ENCODE measurements at regions of chr6 and their contacts with region 1.

Region 1: GRCh38 chr6:40947876-40948526 is 91.0 kb downstream of the UNC5CL start:
- H3K4me3 ChIP-seq: no peak overlapping the region
- H3K27ac ChIP-seq: no peak overlapping the region
- H3K4me1 ChIP-seq: no peaks in the 10 kb centered on the region
- CTCF ChIP-seq: no peak

Region 2: DNA sequence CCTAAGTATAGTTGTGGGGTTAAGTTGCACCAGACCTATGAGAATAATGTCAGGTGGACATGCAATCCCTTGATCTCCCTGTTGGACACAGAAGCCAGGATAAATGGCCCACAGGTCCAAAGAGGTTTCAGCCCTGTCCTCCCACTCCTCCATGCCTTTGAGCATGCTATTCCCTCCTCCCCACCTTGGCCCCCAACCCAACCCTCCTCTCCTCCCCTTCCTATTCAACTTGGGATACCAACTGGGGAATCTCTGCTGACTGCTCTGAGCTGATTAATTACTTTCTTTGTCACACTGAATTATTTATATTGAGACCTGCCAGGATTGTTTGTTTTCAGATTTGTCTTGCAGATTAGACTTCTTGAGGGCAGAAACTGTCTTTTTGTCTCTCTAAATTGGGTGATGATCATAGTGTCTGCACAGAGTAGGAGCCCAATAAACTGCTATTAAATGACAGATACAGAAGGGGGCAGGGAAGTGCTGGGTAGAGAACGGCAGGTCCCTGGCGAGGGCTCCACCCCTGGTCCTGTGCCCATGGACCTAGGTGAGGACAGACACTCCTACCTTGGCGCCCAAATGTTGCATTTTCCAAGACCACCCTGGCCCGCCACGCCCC is 29.9 kb before region 1 on chr6:
- CTCF ChIA-PET with region 1: no interaction called
- POLR2A ChIA-PET with region 1: interaction called, 10 read pairs
- H3K4me3 ChIP-seq: no peak overlapping the region
- H3K27ac ChIP-seq: no peak overlapping the region
- H3K4me1 ChIP-seq: no peaks in the 10 kb centered on the region
- CTCF ChIP-seq: no peak

Measured in HEK293 (cell line).